ENCODE measurements at regions of chr17 and their contacts with region 1.

Region 1: GRCh38 chr17:3636154-3636907 is at the starts of genes CTNS and SHPK:
- DNase-seq: peak; percentile 99
- H3K4me3 ChIP-seq: peak within 1 kb of the TSS; percentile 79
- H3K27ac ChIP-seq: peak within 1 kb of the TSS; percentile 83
- H3K4me1 ChIP-seq: peaks cover 5% of the 10 kb centered on the region; the same call in 1 of the 2 replicates
- H3K27me3 ChIP-seq: no peaks in the 10 kb centered on the region
- total RNA-seq, gene CTNS: 7.5 and 16.6 TPM in 2 replicates
- total RNA-seq, gene SHPK: 5.8 and 7.0 TPM in 2 replicates

Region 2: DNA sequence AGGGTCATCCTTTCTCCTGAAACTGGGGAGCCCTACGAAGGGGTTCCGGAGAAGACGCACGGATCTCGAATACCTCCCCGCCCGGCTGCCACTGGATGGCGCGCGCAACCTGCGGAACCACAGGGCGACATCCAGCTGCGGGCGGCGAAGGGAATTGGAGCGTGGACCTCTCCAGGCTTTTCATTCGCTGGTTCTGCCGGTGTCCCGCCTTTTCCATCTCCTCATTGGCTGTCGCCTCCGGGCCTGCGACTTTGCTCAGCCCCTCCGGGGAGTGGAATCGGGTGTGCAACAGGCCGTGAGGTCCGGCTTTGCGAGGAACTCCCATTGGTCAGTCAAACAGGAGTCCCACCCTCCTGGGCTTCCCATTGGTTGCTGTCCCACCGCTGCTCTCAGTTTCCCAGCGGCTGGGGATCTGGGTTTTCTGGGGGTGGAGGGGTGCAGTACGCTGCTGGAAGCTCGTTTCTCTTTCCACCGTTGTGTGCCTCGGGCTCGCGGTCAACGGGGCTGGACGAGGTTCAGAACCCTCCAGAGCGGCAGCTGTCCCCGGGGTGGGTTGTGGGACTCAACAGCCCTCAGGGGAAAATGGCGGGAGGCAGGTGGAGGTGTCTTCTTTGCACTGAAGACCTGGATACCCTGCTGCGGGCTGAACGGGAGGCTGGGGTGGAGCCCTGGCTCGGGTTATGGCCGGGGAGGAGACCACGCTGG is 587.4 kb before region 1 on chr17:
- in situ Hi-C with region 1: loop called (anchors 25 kb)
- DNase-seq: peak; percentile 99
- H3K4me3 ChIP-seq: peak overlapping the region; percentile 89
- H3K27ac ChIP-seq: no peak overlapping the region
- H3K4me1 ChIP-seq: no peaks in the 10 kb centered on the region
- H3K27me3 ChIP-seq: no peaks in the 10 kb centered on the region

Measured in GM23248 (cell line).